Endothelial cell of umbilical vein (primary cell): ENCODE measurements at regions of chr3 and their contacts with region 1.

Region 1: GRCh38 chr3:88058591-88059368 is at the starts of genes CGGBP1 and ZNF654:
- DNase-seq: peak; percentile 99
- H3K4me3 ChIP-seq: peak within 1 kb of the TSS; percentile 77 to 99 (median 98)
- H3K27ac ChIP-seq: peak within 1 kb of the TSS; percentile 94
- H3K4me1 ChIP-seq: peaks cover 29% of the 10 kb centered on the region
- H3K27me3 ChIP-seq: no peaks in the 10 kb centered on the region
- CTCF ChIP-seq: no peak
- POLR2A ChIP-seq: peak; percentile 79
- total RNA-seq, gene CGGBP1: 69.4 and 69.7 TPM in 2 replicates
- total RNA-seq, gene ZNF654: 14.6 and 14.8 TPM in 2 replicates

Region 2: GRCh38 chr3:87598661-87599318 is 460.0 kb before region 1 on chr3:
- CTCF ChIA-PET with region 1: no interaction called
- POLR2A ChIA-PET with region 1: no interaction called
- dilution Hi-C with region 1: no loop called
- intact Hi-C with region 1: no loop called
- DNase-seq: no peak
- H3K4me3 ChIP-seq: no peak overlapping the region
- H3K27ac ChIP-seq: no peak overlapping the region
- H3K4me1 ChIP-seq: no peaks in the 10 kb centered on the region
- H3K27me3 ChIP-seq: no peaks in the 10 kb centered on the region
- CTCF ChIP-seq: no peak
- POLR2A ChIP-seq: no peak

Region 3: DNA sequence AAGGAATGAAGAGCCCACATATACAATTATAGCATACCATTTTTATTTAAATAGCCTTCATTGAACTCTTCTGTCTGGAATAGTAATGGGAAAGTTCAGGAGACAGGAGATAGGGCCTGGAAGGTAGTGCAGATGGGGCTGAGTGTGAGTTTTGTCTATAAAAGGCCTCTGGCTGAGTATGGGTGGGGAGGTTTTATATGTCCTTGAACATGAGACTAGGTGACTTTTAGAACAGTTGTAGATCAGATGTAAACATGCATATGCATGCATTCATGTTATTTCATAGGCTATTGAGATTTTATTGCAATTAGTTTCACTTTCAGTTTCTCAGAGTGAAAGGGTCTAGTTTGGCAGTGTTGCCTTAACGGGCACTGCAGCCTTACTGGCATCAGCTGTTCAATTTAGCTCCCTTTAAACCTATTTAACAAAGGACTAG is 27.1 kb before region 1 on chr3:
- CTCF ChIA-PET with region 1: interaction called, 5 read pairs
- POLR2A ChIA-PET with region 1: interaction called, 10 read pairs
- dilution Hi-C with region 1: no loop called
- intact Hi-C with region 1: loop called (anchors 1 kb)
- DNase-seq: peak; percentile 77
- H3K4me3 ChIP-seq: peak overlapping the region; percentile 24 to 92 (median 84)
- H3K27ac ChIP-seq: peak overlapping the region; percentile 53
- H3K4me1 ChIP-seq: peaks cover 17% of the 10 kb centered on the region
- H3K27me3 ChIP-seq: no peaks in the 10 kb centered on the region
- CTCF ChIP-seq: no peak
- POLR2A ChIP-seq: no peak

Region 4: GRCh38 chr3:88044411-88044810 is 14.4 kb before region 1 on chr3:
- CTCF ChIA-PET with region 1: interaction called, 6 read pairs
- POLR2A ChIA-PET with region 1: interaction called, 9 read pairs
- dilution Hi-C with region 1: no loop called
- intact Hi-C with region 1: loop called (anchors 1 kb)
- DNase-seq: peak; percentile 83
- H3K4me3 ChIP-seq: no peak overlapping the region
- H3K27ac ChIP-seq: peak overlapping the region; percentile 21
- H3K4me1 ChIP-seq: peaks cover 28% of the 10 kb centered on the region
- H3K27me3 ChIP-seq: no peaks in the 10 kb centered on the region
- CTCF ChIP-seq: no peak
- POLR2A ChIP-seq: no peak

Region 5: GRCh38 chr3:88149509-88150362 is 91.0 kb after region 1 on chr3 and contains the start of gene C3orf38:
- CTCF ChIA-PET with region 1: no interaction called
- POLR2A ChIA-PET with region 1: interaction called, 7 read pairs
- dilution Hi-C with region 1: no loop called
- intact Hi-C with region 1: loop called (anchors 1 kb)
- DNase-seq: peak; percentile 82
- H3K4me3 ChIP-seq: peak within 1 kb of the TSS; percentile 92 to 100 (median 96)
- H3K27ac ChIP-seq: peak within 1 kb of the TSS; percentile 32
- H3K4me1 ChIP-seq: peaks cover 13% of the 10 kb centered on the region
- H3K27me3 ChIP-seq: no peaks in the 10 kb centered on the region
- CTCF ChIP-seq: no peak
- POLR2A ChIP-seq: peak; percentile 83
- total RNA-seq, gene C3orf38: 17.3 and 17.9 TPM in 2 replicates